ENCODE measurements at regions of chr2 and their contacts with region 1.

Region 1: GRCh38 chr2:113889471-113890252 is at the start of gene ACTR3:
- DNase-seq: peak; percentile 96
- ATAC-seq: peak; percentile 79
- H3K4me3 Mint-ChIP-seq: peak within 1 kb of the TSS; percentile 98
- H3K27ac Mint-ChIP-seq: peak within 1 kb of the TSS; percentile 99
- H3K4me1 Mint-ChIP-seq: peaks cover 84% of the 10 kb centered on the region
- H3K27me3 Mint-ChIP-seq: no peaks in the 10 kb centered on the region
- CTCF ChIP-seq: no peak
- total RNA-seq, gene ACTR3: 638 and 639 TPM in 2 replicates

Region 2: GRCh38 chr2:113602869-113603466 is 286.7 kb before region 1 on chr2:
- CTCF ChIA-PET with region 1: no interaction called
- POLR2A ChIA-PET with region 1: no interaction called
- intact Hi-C with region 1: loop called (anchors 2 kb)
- DNase-seq: no peak
- ATAC-seq: peak; percentile 32
- H3K4me3 Mint-ChIP-seq: peak overlapping the region; percentile 94
- H3K27ac Mint-ChIP-seq: peak overlapping the region; percentile 86
- H3K4me1 Mint-ChIP-seq: peaks cover 13% of the 10 kb centered on the region
- H3K27me3 Mint-ChIP-seq: no peaks in the 10 kb centered on the region
- CTCF ChIP-seq: no peak

Region 3: GRCh38 chr2:113858764-113859163 is 30.9 kb before region 1 on chr2:
- CTCF ChIA-PET with region 1: interaction called, 3 read pairs
- POLR2A ChIA-PET with region 1: interaction called, 92 read pairs
- intact Hi-C with region 1: loop called (anchors 1 kb)
- DNase-seq: no peak
- ATAC-seq: no peak
- H3K4me3 Mint-ChIP-seq: peak overlapping the region; percentile 76
- H3K27ac Mint-ChIP-seq: peak overlapping the region; percentile 93
- H3K4me1 Mint-ChIP-seq: peaks cover 93% of the 10 kb centered on the region
- H3K27me3 Mint-ChIP-seq: no peaks in the 10 kb centered on the region
- CTCF ChIP-seq: no peak

Region 4: DNA sequence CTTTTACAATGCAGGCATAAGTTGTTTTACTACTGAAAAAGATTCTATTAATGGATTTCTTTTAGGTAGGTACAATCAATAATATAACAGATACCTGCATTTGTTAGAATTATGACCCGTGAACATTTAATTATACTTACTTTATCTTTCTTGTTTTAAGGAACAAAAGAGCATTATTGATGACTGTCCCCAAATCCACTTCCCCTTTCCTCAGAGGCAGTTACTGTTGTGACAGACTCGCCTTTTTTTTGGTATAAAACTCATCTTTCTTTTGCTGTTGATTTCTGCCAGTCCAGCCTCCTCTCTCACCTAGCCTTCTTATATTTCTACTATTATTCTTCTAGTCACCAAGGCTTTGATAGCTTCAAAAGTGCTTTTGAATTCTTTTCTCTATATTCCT is 12.3 kb after region 1 on chr2:
- CTCF ChIA-PET with region 1: interaction called, 4 read pairs
- POLR2A ChIA-PET with region 1: interaction called, 14 read pairs
- intact Hi-C with region 1: loop called (anchors 1 kb)
- DNase-seq: no peak
- ATAC-seq: peak; percentile 63
- H3K4me3 Mint-ChIP-seq: peak overlapping the region; percentile 53
- H3K27ac Mint-ChIP-seq: peak overlapping the region; percentile 50
- H3K4me1 Mint-ChIP-seq: peaks cover 99% of the 10 kb centered on the region
- H3K27me3 Mint-ChIP-seq: no peaks in the 10 kb centered on the region
- CTCF ChIP-seq: no peak

Region 5: GRCh38 chr2:113930448-113930847 is 40.8 kb after region 1 on chr2:
- CTCF ChIA-PET with region 1: no interaction called
- POLR2A ChIA-PET with region 1: no interaction called
- intact Hi-C with region 1: no loop called
- DNase-seq: no peak
- ATAC-seq: no peak
- H3K4me3 Mint-ChIP-seq: no peak overlapping the region
- H3K27ac Mint-ChIP-seq: no peak overlapping the region
- H3K4me1 Mint-ChIP-seq: peaks cover 14% of the 10 kb centered on the region
- H3K27me3 Mint-ChIP-seq: no peaks in the 10 kb centered on the region
- CTCF ChIP-seq: no peak

Region 6: DNA sequence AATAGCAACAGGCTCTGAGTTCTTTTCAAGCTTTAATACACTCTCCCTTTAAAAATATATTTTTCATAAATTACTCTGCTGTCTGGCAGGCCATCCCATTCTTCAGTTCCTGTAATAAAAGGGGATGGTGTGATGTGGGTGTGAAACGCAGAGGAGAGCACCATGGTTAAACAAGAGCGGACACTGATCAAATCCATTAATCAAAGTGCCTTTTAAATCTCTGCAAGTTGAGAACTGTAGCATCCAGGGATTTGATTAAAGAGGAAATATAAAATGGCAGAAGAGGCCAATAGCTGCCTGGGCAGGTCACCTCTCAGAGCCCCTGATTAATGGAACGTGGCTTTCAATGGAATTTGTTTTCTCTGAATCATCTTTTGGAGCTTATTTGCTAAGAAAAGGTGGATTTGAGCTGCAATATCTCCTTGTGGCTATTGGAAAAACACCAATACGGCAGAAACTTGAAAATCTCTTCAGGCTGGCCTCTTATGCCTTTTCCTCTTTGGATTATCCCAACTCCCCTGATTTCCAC is 97.2 kb after region 1 on chr2:
- CTCF ChIA-PET with region 1: no interaction called
- POLR2A ChIA-PET with region 1: no interaction called
- intact Hi-C with region 1: no loop called
- DNase-seq: no peak
- ATAC-seq: no peak
- H3K4me3 Mint-ChIP-seq: no peak overlapping the region
- H3K27ac Mint-ChIP-seq: no peak overlapping the region
- H3K4me1 Mint-ChIP-seq: no peaks in the 10 kb centered on the region
- H3K27me3 Mint-ChIP-seq: no peaks in the 10 kb centered on the region
- CTCF ChIP-seq: no peak

Measured in activated B cell treated with CpG ODN at 0.5 μM for 24 hours (primary cell).